Endothelial cell of umbilical vein (primary cell): ENCODE measurements at regions of chr1 and their contacts with region 1.

Region 1: GRCh38 chr1:186330758-186331157 is 44.3 kb downstream of the TPR start:
- DNase-seq: no peak
- H3K4me3 ChIP-seq: no peak overlapping the region
- H3K27ac ChIP-seq: no peak overlapping the region
- H3K4me1 ChIP-seq: no peaks in the 10 kb centered on the region
- H3K27me3 ChIP-seq: no peaks in the 10 kb centered on the region
- CTCF ChIP-seq: peak; percentile 7 to 17
- POLR2A ChIP-seq: no peak

Region 2: GRCh38 chr1:185309566-185309965 is 1021.2 kb before region 1 on chr1:
- CTCF ChIA-PET with region 1: no interaction called
- POLR2A ChIA-PET with region 1: no interaction called
- dilution Hi-C with region 1: no loop called
- intact Hi-C with region 1: loop called (anchors 10 kb)
- DNase-seq: peak; percentile 54
- H3K4me3 ChIP-seq: no peak overlapping the region
- H3K27ac ChIP-seq: no peak overlapping the region
- H3K4me1 ChIP-seq: peaks cover 28% of the 10 kb centered on the region
- H3K27me3 ChIP-seq: no peaks in the 10 kb centered on the region
- CTCF ChIP-seq: no peak
- POLR2A ChIP-seq: no peak

Region 3: GRCh38 chr1:186225096-186225495 is 105.7 kb before region 1 on chr1:
- CTCF ChIA-PET with region 1: no interaction called
- POLR2A ChIA-PET with region 1: no interaction called
- dilution Hi-C with region 1: no loop called
- intact Hi-C with region 1: no loop called
- DNase-seq: no peak
- H3K4me3 ChIP-seq: no peak overlapping the region
- H3K27ac ChIP-seq: no peak overlapping the region
- H3K4me1 ChIP-seq: no peaks in the 10 kb centered on the region
- H3K27me3 ChIP-seq: no peaks in the 10 kb centered on the region
- CTCF ChIP-seq: no peak
- POLR2A ChIP-seq: no peak

Region 4: DNA sequence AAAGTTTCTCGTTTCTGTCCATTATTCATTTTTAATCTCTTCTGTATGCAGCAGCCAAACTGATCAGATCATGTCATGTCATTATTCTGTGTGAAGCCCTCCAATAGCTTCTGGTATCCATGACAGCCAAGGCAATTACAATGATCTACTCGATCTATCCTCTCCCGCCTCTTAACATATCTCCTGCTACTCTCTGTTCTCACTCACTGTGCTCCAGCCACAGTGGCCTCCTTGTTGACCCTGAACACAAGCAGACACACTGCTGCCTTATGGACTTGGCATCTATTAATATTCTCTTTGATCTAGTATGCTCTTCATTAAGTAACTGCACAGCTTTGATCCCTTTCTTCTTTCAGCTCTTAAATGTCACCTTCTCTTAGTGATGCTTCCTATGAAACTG is 15.2 kb before region 1 on chr1:
- CTCF ChIA-PET with region 1: interaction called, 34 read pairs
- POLR2A ChIA-PET with region 1: no interaction called
- dilution Hi-C with region 1: no loop called
- intact Hi-C with region 1: no loop called
- DNase-seq: no peak
- H3K4me3 ChIP-seq: no peak overlapping the region
- H3K27ac ChIP-seq: no peak overlapping the region
- H3K4me1 ChIP-seq: no peaks in the 10 kb centered on the region
- H3K27me3 ChIP-seq: no peaks in the 10 kb centered on the region
- CTCF ChIP-seq: no peak
- POLR2A ChIP-seq: no peak

Region 5: DNA sequence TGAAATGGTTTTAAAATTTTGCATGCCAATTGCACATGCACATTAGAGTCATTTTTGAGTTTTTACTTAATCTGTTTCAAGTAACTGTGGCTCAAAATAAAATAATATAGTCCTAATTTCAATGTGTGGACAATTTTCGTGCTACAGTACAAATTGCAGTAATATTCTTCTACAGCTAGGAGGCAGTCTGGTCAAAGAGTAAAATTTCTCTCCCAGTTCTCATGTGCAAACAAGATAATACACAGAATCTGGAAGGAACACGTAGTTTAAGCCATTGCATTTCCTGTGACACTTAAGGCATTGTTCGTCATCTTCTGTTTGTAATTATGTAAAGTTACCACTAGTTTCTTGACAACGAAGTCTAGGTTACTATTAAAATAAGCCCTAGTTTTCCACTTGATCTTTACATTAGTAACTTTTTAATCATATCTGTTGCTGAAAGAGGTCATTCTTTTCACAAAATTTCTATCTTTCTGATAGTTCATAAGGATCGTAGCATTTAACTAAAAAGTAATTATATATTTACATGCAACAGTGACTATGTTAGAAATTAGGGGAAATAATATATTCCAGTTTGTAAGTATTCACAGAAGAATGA is 73.8 kb after region 1 on chr1:
- CTCF ChIA-PET with region 1: no interaction called
- POLR2A ChIA-PET with region 1: no interaction called
- dilution Hi-C with region 1: no loop called
- intact Hi-C with region 1: no loop called
- DNase-seq: peak; percentile 89
- H3K4me3 ChIP-seq: no peak overlapping the region
- H3K27ac ChIP-seq: peak overlapping the region; percentile 89
- H3K4me1 ChIP-seq: peaks cover 6% of the 10 kb centered on the region
- H3K27me3 ChIP-seq: no peaks in the 10 kb centered on the region
- CTCF ChIP-seq: peak; percentile 47 to 66
- POLR2A ChIP-seq: no peak